Panc1 (cell line): ENCODE measurements at regions of chr10 and their contacts with region 1.

Region 1: GRCh38 chr10:17756557-17757217 is 4.7 kb downstream of the TMEM236 start:
- DNase-seq: no peak
- ATAC-seq: peak; percentile 75
- H3K4me3 ChIP-seq: peak overlapping the region; percentile 5 to 6
- H3K27ac ChIP-seq: peak overlapping the region; percentile 64; the same call in 1 of the 2 replicates
- H3K4me1 ChIP-seq: no peaks in the 10 kb centered on the region
- H3K27me3 ChIP-seq: no peaks in the 10 kb centered on the region
- CTCF ChIP-seq: no peak

Region 2: GRCh38 chr10:18005781-18006456 is 249.2 kb after region 1 on chr10:
- CTCF ChIA-PET with region 1: no interaction called
- POLR2A ChIA-PET with region 1: interaction called, 11 read pairs
- in situ Hi-C with region 1: no loop called
- intact Hi-C with region 1: no loop called
- DNase-seq: no peak
- ATAC-seq: no peak; the same call in 1 of the 2 replicates
- H3K4me3 ChIP-seq: peak overlapping the region in 1 of 2 experiments; percentile 20; a peak in 1 of 4 replicates
- H3K27ac ChIP-seq: no peak overlapping the region
- H3K4me1 ChIP-seq: no peaks in the 10 kb centered on the region
- H3K27me3 ChIP-seq: no peaks in the 10 kb centered on the region
- CTCF ChIP-seq: no peak